RWPE1 (cell line): ENCODE measurements at regions of chr1 and their contacts with region 1.

Region 1: DNA sequence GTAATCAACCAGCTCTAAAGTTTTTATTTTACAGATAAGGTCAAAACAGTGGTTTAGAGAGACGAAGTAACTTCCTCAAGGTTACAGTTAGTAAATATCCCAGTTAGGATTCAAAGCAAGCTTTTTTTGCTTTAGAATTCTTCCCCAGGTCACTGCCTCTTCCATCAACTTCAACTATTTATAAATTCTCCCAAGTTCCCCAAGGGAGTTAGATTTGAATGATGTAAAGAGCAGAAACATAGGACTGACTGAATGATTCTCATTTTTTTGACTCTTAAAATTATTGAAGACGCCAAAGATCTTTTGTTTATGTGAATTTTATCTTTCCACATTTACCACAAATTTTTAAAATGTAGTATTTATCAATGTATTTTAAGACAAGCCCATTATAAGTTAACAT is 4.1 kb downstream of the POGZ start:
- DNase-seq: no peak
- H3K27ac ChIP-seq: no peak overlapping the region
- CTCF ChIP-seq: no peak

Region 2: DNA sequence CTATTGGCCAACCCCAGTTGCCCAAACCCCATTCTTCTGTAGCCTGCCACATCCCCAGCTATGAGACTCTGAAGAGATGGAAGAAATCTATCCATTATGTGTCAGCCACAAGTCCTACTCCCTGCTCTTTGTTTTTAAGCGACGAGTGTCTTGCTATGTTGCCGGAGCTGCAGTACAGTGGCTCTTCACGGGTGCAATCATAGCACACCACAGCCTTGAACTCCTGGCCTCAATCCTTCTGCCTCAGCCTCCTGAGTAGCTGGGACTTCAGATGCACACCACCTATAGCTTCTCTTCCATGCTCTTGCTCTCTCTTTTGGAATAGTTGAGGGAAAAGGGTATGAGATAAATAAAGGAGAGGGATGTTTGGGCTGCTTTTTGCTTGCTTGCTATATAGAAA is 86.5 kb after region 1 on chr1:
- CTCF ChIA-PET with region 1: no interaction called
- POLR2A ChIA-PET with region 1: interaction called, 10 read pairs
- DNase-seq: no peak
- H3K27ac ChIP-seq: peak overlapping the region; percentile 97
- CTCF ChIP-seq: no peak